MCF 10A (cell line): ENCODE measurements at regions of chr13 and their contacts with region 1.

Region 1: DNA sequence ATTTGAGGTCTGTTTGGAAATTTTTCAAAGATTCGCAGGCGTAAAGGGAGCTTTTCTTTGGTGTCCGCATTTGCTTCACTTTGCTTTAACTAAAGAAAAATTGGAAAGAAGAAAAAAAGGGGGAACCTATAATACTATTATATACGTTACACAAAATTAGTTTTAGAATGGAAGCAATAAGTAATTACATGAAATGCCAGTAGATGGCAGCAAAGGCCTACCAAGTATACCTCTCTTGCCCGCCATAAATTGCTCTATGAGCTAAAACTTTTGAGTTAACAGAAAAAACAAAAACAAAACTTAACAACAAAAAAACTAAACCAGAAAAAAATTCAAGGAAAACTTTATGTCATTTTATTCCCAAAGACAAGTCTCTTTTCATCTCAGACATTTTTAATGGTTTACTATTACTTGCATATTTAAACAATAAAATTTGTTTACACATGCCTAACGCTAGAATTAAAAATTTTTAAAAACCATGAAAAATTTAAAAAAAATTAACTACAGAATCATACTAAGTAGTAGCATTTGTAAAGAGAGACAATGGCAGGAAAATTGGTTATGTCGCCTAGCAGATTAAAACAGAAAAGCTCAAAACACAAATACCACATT is 271.4 kb downstream of the NALCN start:
- DNase-seq: peak; percentile 67
- H3K4me3 Mint-ChIP-seq: no peak overlapping the region
- H3K27ac Mint-ChIP-seq: no peak overlapping the region
- H3K4me1 Mint-ChIP-seq: no peaks in the 10 kb centered on the region
- H3K27me3 Mint-ChIP-seq: no peaks in the 10 kb centered on the region
- CTCF ChIP-seq: peak; percentile 60

Region 2: GRCh38 chr13:100854021-100854420 is 290.9 kb before region 1 on chr13:
- CTCF ChIA-PET with region 1: no interaction called
- POLR2A ChIA-PET with region 1: no interaction called
- intact Hi-C with region 1: no loop called
- DNase-seq: no peak
- H3K4me3 Mint-ChIP-seq: no peak overlapping the region
- H3K27ac Mint-ChIP-seq: no peak overlapping the region
- H3K4me1 Mint-ChIP-seq: no peaks in the 10 kb centered on the region
- H3K27me3 Mint-ChIP-seq: no peaks in the 10 kb centered on the region
- CTCF ChIP-seq: no peak

Region 3: GRCh38 chr13:101155920-101156319 is 11.0 kb after region 1 on chr13:
- CTCF ChIA-PET with region 1: interaction called, 25 read pairs
- POLR2A ChIA-PET with region 1: no interaction called
- intact Hi-C with region 1: no loop called
- DNase-seq: peak; percentile 20
- H3K4me3 Mint-ChIP-seq: no peak overlapping the region
- H3K27ac Mint-ChIP-seq: no peak overlapping the region
- H3K4me1 Mint-ChIP-seq: peaks cover 3% of the 10 kb centered on the region
- H3K27me3 Mint-ChIP-seq: no peaks in the 10 kb centered on the region
- CTCF ChIP-seq: peak; percentile 29

Region 4: DNA sequence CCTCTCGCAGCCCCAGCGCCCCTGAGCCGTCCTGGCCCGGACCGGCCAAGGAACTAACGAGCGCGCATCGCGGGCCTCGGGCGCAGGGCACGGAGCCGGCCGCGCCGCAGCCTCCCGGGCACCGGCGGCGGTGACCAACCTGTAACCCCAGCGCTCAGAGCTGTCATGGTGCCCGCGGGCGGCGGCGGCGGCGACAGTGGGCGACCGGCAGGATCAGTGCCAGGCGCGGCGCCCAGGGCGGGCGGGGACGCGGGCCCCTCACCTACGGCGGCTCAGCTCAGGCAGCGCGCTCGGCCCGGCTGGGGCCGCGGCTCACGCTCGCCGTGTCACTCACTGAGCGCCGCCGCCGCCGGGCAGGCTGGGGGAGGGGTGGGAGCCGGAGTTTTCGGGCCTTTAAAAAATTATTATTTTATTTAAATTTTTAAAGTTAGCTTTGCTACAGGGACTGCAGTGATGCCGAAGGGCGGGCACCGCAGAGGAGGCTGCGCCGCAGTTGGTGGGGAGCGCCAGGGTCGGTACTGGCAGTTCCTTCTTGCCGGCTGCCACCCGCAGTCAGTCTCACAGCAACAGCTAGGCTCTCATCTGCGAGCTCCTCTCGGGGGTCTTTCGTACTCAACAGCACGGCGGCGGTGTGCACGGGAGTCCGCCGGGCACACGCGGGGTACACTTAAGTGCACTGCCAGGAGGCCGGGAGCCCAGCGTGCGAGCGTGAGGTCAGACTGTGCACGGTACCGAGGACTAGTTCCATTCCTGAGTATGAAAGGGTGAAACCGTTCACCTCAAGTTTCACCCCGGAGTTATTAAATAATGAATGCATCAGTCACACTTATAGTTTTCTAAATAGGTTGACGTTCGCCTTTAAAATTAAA is 271.5 kb after region 1 on chr13 and contains the start of gene NALCN:
- CTCF ChIA-PET with region 1: interaction called, 5 read pairs
- POLR2A ChIA-PET with region 1: no interaction called
- intact Hi-C with region 1: loop called (anchors 10 kb)
- DNase-seq: peak; percentile 47
- H3K4me3 Mint-ChIP-seq: peak within 1 kb of the TSS; percentile 75
- H3K27ac Mint-ChIP-seq: peak within 1 kb of the TSS; percentile 79
- H3K4me1 Mint-ChIP-seq: peaks cover 5% of the 10 kb centered on the region
- H3K27me3 Mint-ChIP-seq: no peaks in the 10 kb centered on the region
- CTCF ChIP-seq: no peak
- total RNA-seq, gene NALCN: 8.5 and 10.4 TPM in 2 replicates

Region 5: DNA sequence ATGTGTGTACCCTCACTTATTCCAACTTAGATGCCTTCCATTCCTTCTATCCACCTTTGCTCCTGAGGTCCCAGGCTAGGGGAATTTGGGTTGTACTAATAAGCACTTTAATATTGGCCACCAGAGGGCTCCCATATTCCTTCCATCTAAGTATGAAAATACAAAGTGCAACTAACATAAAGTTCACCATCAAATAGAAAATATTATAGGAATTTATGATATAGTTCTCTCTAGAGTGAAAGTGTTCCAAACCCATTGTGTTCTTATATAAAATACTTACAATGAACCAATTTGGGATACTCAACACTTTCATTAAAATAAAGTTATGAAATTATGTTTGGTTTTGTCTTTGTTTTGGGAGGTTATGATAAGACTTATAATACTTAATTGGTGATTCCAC is 369.9 kb after region 1 on chr13:
- CTCF ChIA-PET with region 1: interaction called, 14 read pairs
- POLR2A ChIA-PET with region 1: interaction called, 4 read pairs
- intact Hi-C with region 1: loop called (anchors 2 kb)
- DNase-seq: peak; percentile 78
- H3K4me3 Mint-ChIP-seq: no peak overlapping the region
- H3K27ac Mint-ChIP-seq: peak overlapping the region; percentile 12
- H3K4me1 Mint-ChIP-seq: peaks cover 16% of the 10 kb centered on the region
- H3K27me3 Mint-ChIP-seq: no peaks in the 10 kb centered on the region
- CTCF ChIP-seq: peak; percentile 58

Region 6: GRCh38 chr13:101919541-101920181 is 774.7 kb after region 1 on chr13:
- CTCF ChIA-PET with region 1: interaction called, 6 read pairs
- POLR2A ChIA-PET with region 1: no interaction called
- intact Hi-C with region 1: loop called (anchors 2 kb)
- DNase-seq: peak; percentile 37
- H3K4me3 Mint-ChIP-seq: peak overlapping the region; percentile 4
- H3K27ac Mint-ChIP-seq: no peak overlapping the region
- H3K4me1 Mint-ChIP-seq: no peaks in the 10 kb centered on the region
- H3K27me3 Mint-ChIP-seq: peaks cover 73% of the 10 kb centered on the region
- CTCF ChIP-seq: no peak